Endothelial cell of umbilical vein (primary cell): ENCODE measurements at regions of chr17 and their contacts with region 1.

Region 1: DNA sequence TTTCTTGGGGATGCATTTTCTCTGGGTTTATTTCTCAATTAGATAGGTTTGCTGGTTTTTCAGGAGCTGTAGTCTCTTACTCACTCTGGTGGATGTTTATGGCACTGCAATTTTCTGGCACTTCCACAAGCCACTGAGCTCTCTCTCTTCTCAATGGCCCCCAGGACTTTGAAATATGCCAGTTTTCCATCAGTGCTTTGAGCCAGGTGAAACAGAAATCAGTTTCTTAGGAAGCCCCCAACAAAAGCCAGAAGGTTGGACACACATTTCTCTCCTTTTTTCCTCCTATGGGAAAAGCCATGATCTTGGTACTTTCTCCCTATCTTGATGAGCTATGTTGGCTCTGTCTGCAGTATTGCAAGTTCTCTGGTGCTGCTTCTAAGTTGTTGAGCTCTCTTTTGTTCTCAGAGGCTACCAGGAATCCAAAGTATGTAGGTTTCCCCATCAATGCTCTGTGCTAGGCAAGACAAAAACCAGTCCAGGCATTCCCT is 90.7 kb upstream of the SMIM36 start:
- DNase-seq: peak; percentile 69
- H3K4me3 ChIP-seq: no peak overlapping the region
- H3K27ac ChIP-seq: no peak overlapping the region
- H3K4me1 ChIP-seq: no peaks in the 10 kb centered on the region
- H3K27me3 ChIP-seq: peaks cover 0 to 3% of the 10 kb centered on the region in 2 experiments
- CTCF ChIP-seq: peak; percentile 71 to 72
- POLR2A ChIP-seq: no peak

Region 2: DNA sequence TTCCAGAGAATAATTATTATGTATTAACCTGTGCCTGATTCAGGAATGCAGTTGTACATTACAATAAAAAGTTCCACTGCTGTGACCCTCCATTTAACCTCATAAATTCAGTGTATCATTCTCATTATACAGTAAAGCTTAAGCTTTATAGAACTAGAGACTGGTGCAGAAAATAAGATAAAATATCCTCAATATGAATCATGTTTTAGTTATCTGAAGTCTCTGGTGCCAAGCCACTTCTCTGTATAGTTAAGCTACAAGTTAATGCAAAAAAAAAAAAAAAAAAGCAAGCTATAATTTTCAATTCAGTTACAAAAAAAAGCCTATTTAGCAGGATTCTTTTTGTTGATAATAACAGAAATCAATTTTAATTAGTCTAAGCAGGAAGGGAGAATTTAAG is 68.3 kb before region 1 on chr17:
- CTCF ChIA-PET with region 1: interaction called, 357 read pairs
- POLR2A ChIA-PET with region 1: no interaction called
- dilution Hi-C with region 1: no loop called
- intact Hi-C with region 1: no loop called
- DNase-seq: peak; percentile 28
- H3K4me3 ChIP-seq: no peak overlapping the region
- H3K27ac ChIP-seq: no peak overlapping the region
- H3K4me1 ChIP-seq: peaks cover 18% of the 10 kb centered on the region
- H3K27me3 ChIP-seq: no peaks in the 10 kb centered on the region
- CTCF ChIP-seq: no peak
- POLR2A ChIP-seq: no peak

Region 3: DNA sequence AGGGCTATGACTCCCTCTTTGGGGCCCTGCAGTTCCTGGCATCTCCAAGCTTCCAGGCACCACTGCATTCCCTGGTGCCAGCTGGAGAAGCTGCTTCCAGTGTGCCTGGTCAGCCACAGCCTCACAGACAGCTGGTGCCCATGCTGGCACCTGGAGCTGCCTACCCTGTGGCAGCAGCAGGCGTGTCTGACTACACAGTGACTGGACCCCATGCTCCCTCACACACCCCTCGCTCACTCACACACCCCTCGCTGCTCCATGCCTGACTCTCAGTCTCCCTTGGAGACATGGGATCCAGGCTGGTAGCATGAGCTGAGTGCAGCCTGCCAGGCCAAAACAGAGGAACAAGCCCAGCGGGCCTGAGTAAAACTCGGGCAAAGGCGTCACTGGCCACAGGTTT is 31.6 kb before region 1 on chr17:
- CTCF ChIA-PET with region 1: interaction called, 21 read pairs
- POLR2A ChIA-PET with region 1: no interaction called
- dilution Hi-C with region 1: no loop called
- intact Hi-C with region 1: no loop called
- DNase-seq: no peak
- H3K4me3 ChIP-seq: no peak overlapping the region
- H3K27ac ChIP-seq: no peak overlapping the region
- H3K4me1 ChIP-seq: no peaks in the 10 kb centered on the region
- H3K27me3 ChIP-seq: peaks cover 0 to 5% of the 10 kb centered on the region in 2 experiments
- CTCF ChIP-seq: no peak
- POLR2A ChIP-seq: no peak

Region 4: GRCh38 chr17:55612691-55613141 is 10.8 kb after region 1 on chr17:
- CTCF ChIA-PET with region 1: interaction called, 79 read pairs
- POLR2A ChIA-PET with region 1: no interaction called
- dilution Hi-C with region 1: no loop called
- intact Hi-C with region 1: no loop called
- DNase-seq: no peak
- H3K4me3 ChIP-seq: no peak overlapping the region
- H3K27ac ChIP-seq: no peak overlapping the region
- H3K4me1 ChIP-seq: no peaks in the 10 kb centered on the region
- H3K27me3 ChIP-seq: no peaks in the 10 kb centered on the region
- CTCF ChIP-seq: no peak
- POLR2A ChIP-seq: no peak

Region 5: DNA sequence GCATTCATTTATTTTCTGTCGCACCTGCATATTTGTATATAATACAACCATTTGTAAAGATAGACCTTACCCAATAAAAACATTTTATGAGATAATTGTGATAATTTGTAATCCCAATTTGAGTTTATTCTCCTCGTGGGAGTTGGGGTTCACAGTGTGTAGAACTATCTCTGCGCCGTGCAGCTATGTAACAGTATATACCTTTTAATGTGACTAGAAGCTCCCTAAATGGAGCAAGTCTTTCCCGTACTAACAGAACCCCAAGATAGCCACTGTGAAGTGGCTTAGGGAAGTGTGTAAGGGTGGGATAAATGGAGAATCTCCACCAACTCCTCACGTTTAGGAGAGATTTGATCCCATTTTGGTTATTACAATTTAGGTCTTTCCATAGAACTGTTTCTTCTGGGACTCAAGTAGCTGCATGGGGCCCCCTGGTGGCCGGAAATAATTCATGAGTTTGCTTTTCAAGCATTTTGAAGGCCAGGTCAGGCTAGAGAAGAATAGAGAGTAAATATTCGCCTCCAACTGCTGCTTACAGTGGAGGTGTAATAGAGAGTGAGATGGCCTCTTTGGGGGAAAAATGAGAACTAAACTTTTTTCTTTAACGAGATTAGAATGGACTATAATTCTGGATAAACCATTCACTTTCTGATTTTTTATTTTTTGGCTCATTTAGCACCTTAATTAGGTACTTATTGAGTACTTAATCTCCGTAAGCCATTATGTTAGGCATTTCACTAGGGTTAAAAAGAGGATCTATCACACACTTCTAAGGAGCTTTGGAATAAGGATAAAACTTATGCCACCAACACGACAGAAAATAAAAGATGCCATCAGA is 116.2 kb after region 1 on chr17:
- CTCF ChIA-PET with region 1: interaction called, 27 read pairs
- POLR2A ChIA-PET with region 1: no interaction called
- dilution Hi-C with region 1: no loop called
- intact Hi-C with region 1: loop called (anchors 1 kb)
- DNase-seq: peak; percentile 72
- H3K4me3 ChIP-seq: no peak overlapping the region
- H3K27ac ChIP-seq: no peak overlapping the region
- H3K4me1 ChIP-seq: peaks cover 2% of the 10 kb centered on the region
- H3K27me3 ChIP-seq: peaks cover 0 to 4% of the 10 kb centered on the region in 2 experiments
- CTCF ChIP-seq: peak; percentile 60 to 66
- POLR2A ChIP-seq: no peak

Region 6: DNA sequence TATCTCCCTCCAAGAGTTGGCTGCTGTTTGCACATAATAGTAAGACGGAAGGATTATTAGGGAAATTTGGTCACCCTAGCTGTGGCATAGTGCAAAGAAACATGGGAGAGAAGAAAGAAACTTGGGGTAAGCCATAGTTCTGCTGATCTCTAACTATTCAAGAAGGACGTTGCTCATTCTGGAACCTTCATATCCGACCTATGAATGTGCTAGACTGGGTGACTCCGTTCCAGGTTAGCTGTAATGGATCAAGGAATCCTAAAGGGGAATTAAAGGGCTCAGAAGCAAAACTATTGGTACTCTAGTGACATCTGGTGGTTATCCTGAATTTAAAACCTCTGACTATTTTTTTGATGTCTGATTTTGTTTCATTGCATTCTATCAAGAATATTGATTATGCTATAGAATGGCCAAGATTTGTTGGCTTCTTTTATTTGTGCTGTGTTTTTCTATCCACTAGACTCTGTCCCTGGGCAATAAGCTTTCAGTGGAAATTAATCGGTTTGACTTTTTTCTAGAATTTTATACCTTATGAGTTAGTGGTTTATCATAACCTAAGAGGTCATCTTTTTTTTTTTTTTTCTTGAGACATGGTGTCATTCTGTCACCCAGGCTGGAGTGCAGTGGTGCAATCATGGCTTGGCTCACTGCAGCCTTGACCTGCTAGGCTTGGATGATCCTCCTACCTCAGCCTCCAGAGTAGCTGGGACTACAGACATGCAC is 168.4 kb after region 1 on chr17:
- CTCF ChIA-PET with region 1: interaction called, 86 read pairs
- POLR2A ChIA-PET with region 1: no interaction called
- dilution Hi-C with region 1: no loop called
- intact Hi-C with region 1: loop called (anchors 1 kb)
- DNase-seq: peak; percentile 49
- H3K4me3 ChIP-seq: no peak overlapping the region
- H3K27ac ChIP-seq: no peak overlapping the region
- H3K4me1 ChIP-seq: no peaks in the 10 kb centered on the region
- H3K27me3 ChIP-seq: no peaks in the 10 kb centered on the region
- CTCF ChIP-seq: peak; percentile 31 to 33
- POLR2A ChIP-seq: no peak